ENCODE measurements at regions of chr1 and their contacts with region 1.

Region 1: GRCh38 chr1:150753416-150753815 is 12.2 kb downstream of the CTSS start:
- DNase-seq: no peak
- H3K4me3 ChIP-seq: no peak overlapping the region
- H3K27ac ChIP-seq: no peak overlapping the region
- H3K4me1 ChIP-seq: no peaks in the 10 kb centered on the region
- H3K27me3 ChIP-seq: no peaks in the 10 kb centered on the region
- CTCF ChIP-seq: no peak
- POLR2A ChIP-seq: no peak

Region 2: DNA sequence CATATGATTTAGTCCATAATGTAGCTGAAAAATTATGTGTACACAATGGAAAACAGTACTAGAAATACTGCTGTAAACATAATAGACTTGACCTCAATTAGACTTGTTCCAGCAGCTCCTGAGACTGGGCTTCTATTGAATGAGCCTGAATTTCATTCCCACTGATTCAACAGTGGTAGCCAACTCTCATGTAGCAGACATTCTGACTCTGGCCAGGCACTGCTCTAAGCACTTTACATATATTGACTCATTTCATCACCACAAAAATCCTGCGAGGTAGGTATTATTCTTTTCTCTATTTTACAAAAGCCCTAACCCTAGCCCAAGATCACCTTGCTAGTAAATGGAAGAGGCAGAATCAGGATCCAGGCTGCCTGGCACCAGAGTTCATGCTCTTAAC is 25.0 kb after region 1 on chr1:
- intact Hi-C with region 1: no loop called
- DNase-seq: no peak
- H3K4me3 ChIP-seq: no peak overlapping the region
- H3K27ac ChIP-seq: no peak overlapping the region
- H3K4me1 ChIP-seq: no peaks in the 10 kb centered on the region
- H3K27me3 ChIP-seq: no peaks in the 10 kb centered on the region
- CTCF ChIP-seq: no peak
- POLR2A ChIP-seq: no peak

Region 3: GRCh38 chr1:150820710-150821512 is 67.5 kb after region 1 on chr1:
- intact Hi-C with region 1: no loop called
- DNase-seq: no peak
- H3K4me3 ChIP-seq: no peak overlapping the region
- H3K27ac ChIP-seq: no peak overlapping the region
- H3K4me1 ChIP-seq: no peaks in the 10 kb centered on the region
- H3K27me3 ChIP-seq: no peaks in the 10 kb centered on the region
- CTCF ChIP-seq: no peak
- POLR2A ChIP-seq: no peak

Region 4: GRCh38 chr1:150906341-150906740 is 152.9 kb after region 1 on chr1:
- intact Hi-C with region 1: loop called (anchors 5 kb)
- DNase-seq: no peak
- H3K4me3 ChIP-seq: no peak overlapping the region
- H3K27ac ChIP-seq: no peak overlapping the region
- H3K4me1 ChIP-seq: no peaks in the 10 kb centered on the region
- H3K27me3 ChIP-seq: no peaks in the 10 kb centered on the region
- CTCF ChIP-seq: no peak
- POLR2A ChIP-seq: no peak

Region 5: GRCh38 chr1:151222130-151222529 is 468.7 kb after region 1 on chr1:
- intact Hi-C with region 1: no loop called
- DNase-seq: no peak
- H3K4me3 ChIP-seq: no peak overlapping the region
- H3K27ac ChIP-seq: no peak overlapping the region
- H3K4me1 ChIP-seq: no peaks in the 10 kb centered on the region
- H3K27me3 ChIP-seq: no peaks in the 10 kb centered on the region
- CTCF ChIP-seq: no peak
- POLR2A ChIP-seq: no peak

Measured in breast epithelium (tissue), 4 donors.